ENCODE measurements at regions of chr9 and their contacts with region 1.

Region 1: GRCh38 chr9:89602978-89603766 is 1.6 kb upstream of the GADD45G start:
- DNase-seq: peak; percentile 67 to 89 (median 88)
- ATAC-seq: peak; percentile 21
- H3K4me3 ChIP-seq: peak overlapping the region; percentile 50 to 64
- H3K4me3 Mint-ChIP-seq: peak overlapping the region; percentile 79
- H3K27ac ChIP-seq: no peak overlapping the region
- H3K27ac Mint-ChIP-seq: peak overlapping the region; percentile 72
- H3K4me1 ChIP-seq: peaks cover 37% of the 10 kb centered on the region
- H3K4me1 Mint-ChIP-seq: peaks cover 27% of the 10 kb centered on the region
- H3K27me3 ChIP-seq: peaks cover 0 to 9% of the 10 kb centered on the region in 2 experiments
- H3K27me3 Mint-ChIP-seq: peaks cover 3% of the 10 kb centered on the region
- CTCF ChIP-seq: peak; percentile 76

Region 2: GRCh38 chr9:89154651-89155336 is 448.4 kb before region 1 on chr9:
- CTCF ChIA-PET with region 1: no interaction called
- POLR2A ChIA-PET with region 1: no interaction called
- intact Hi-C with region 1: no loop called
- DNase-seq: peak in 1 of 9 experiments; percentile 26
- ATAC-seq: peak; percentile 46
- H3K4me3 ChIP-seq: no peak overlapping the region
- H3K4me3 Mint-ChIP-seq: no peak overlapping the region
- H3K27ac ChIP-seq: no peak overlapping the region
- H3K27ac Mint-ChIP-seq: no peak overlapping the region
- H3K4me1 ChIP-seq: no peaks in the 10 kb centered on the region
- H3K4me1 Mint-ChIP-seq: peaks cover 7% of the 10 kb centered on the region
- H3K27me3 ChIP-seq: no peaks in the 10 kb centered on the region
- H3K27me3 Mint-ChIP-seq: peaks cover 38% of the 10 kb centered on the region
- CTCF ChIP-seq: no peak

Region 3: DNA sequence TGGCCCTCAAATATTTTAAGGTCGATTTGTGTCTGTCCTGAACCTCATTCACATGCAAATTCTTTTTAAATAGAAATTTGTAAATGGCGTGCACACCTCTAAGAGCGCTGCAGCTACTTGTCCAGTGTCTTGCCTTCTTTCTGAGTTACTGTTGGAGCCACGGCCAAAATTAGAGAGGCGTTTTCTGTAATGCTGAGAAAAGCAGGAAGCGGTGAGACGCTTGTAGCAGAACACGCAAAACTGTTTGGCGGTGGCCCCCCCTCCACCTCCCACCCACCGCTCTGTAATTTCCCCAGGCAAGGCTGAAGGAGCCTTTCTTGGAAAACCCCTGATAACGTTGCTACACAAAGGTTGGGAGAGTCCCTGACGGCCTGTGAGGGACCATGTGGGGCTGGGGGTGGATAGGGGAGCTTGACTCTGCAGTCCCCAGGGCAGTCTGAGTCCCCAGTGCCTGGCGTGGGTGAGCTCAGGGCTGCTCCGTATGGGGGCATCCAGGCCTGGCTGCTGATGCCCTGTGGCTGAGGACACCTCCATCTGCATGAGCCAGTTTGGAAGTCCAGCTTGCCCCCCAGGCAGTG is 98.1 kb after region 1 on chr9:
- CTCF ChIA-PET with region 1: interaction called, 3 read pairs
- POLR2A ChIA-PET with region 1: interaction called, 3 read pairs
- intact Hi-C with region 1: loop called in 1 of 2 experiments (anchors 2 kb)
- DNase-seq: peak in 8 of 9 experiments; percentile 17 to 91 (median 42)
- ATAC-seq: peak; percentile 91
- H3K4me3 ChIP-seq: peak overlapping the region in 1 of 2 experiments; percentile 4
- H3K4me3 Mint-ChIP-seq: peak overlapping the region; percentile 49
- H3K27ac ChIP-seq: no peak overlapping the region
- H3K27ac Mint-ChIP-seq: no peak overlapping the region
- H3K4me1 ChIP-seq: peaks cover 16% of the 10 kb centered on the region
- H3K4me1 Mint-ChIP-seq: peaks cover 19% of the 10 kb centered on the region
- H3K27me3 ChIP-seq: no peaks in the 10 kb centered on the region
- H3K27me3 Mint-ChIP-seq: no peaks in the 10 kb centered on the region
- CTCF ChIP-seq: no peak

Region 4: GRCh38 chr9:89919169-89919681 is 316.1 kb after region 1 on chr9:
- CTCF ChIA-PET with region 1: interaction called, 31 read pairs
- POLR2A ChIA-PET with region 1: no interaction called
- intact Hi-C with region 1: loop called (anchors 1 to 2 kb)
- DNase-seq: peak in 4 of 9 experiments; percentile 12 to 53 (median 32)
- ATAC-seq: peak; percentile 51
- H3K4me3 ChIP-seq: no peak overlapping the region
- H3K4me3 Mint-ChIP-seq: no peak overlapping the region
- H3K27ac ChIP-seq: no peak overlapping the region
- H3K27ac Mint-ChIP-seq: no peak overlapping the region
- H3K4me1 ChIP-seq: no peaks in the 10 kb centered on the region
- H3K4me1 Mint-ChIP-seq: peaks cover 3% of the 10 kb centered on the region
- H3K27me3 ChIP-seq: peaks cover 0 to 3% of the 10 kb centered on the region in 2 experiments
- H3K27me3 Mint-ChIP-seq: peaks cover 11% of the 10 kb centered on the region
- CTCF ChIP-seq: no peak

Region 5: DNA sequence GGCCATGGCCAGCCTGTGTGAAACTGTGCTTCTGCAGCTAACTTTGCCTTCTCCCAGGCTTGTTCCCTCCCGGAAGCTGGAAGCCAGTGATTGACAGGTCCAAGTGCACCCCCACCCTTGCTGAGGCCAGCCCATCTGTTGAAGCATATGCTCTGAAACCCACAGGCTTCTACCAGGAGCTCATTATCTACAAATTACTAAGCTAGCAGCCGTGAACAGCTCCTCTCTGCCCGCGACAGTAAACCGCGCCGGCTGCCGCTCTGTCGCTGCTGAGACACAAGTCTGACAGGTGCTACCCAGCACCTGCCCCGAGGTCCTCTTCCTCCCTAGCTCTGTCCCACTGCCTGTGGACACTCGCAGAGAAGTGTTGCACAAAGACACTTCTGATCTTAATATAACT is 492.5 kb after region 1 on chr9:
- CTCF ChIA-PET with region 1: interaction called, 35 read pairs
- POLR2A ChIA-PET with region 1: no interaction called
- intact Hi-C with region 1: no loop called
- DNase-seq: no peak
- ATAC-seq: no peak
- H3K4me3 ChIP-seq: no peak overlapping the region
- H3K4me3 Mint-ChIP-seq: no peak overlapping the region
- H3K27ac ChIP-seq: no peak overlapping the region
- H3K27ac Mint-ChIP-seq: no peak overlapping the region
- H3K4me1 ChIP-seq: peaks cover 19% of the 10 kb centered on the region
- H3K4me1 Mint-ChIP-seq: peaks cover 26% of the 10 kb centered on the region
- H3K27me3 ChIP-seq: peaks cover 0 to 5% of the 10 kb centered on the region in 2 experiments
- H3K27me3 Mint-ChIP-seq: peaks cover 19% of the 10 kb centered on the region
- CTCF ChIP-seq: no peak